Ascending aorta (tissue), 2 donors: ENCODE measurements at regions of chr2 and their contacts with region 1.

Region 1: GRCh38 chr2:174577967-174578589 is 19.5 kb downstream of the WIPF1 start:
- DNase-seq: no peak
- H3K4me3 ChIP-seq: no peak overlapping the region
- H3K27ac ChIP-seq: no peak overlapping the region
- H3K4me1 ChIP-seq: peaks cover 0 to 5% of the 10 kb centered on the region in 2 donors
- H3K27me3 ChIP-seq: no peaks in the 10 kb centered on the region
- CTCF ChIP-seq: peak; percentile 51 to 59 (median 51)

Region 2: GRCh38 chr2:174561283-174561971 is 16.7 kb before region 1 on chr2:
- intact Hi-C with region 1: no loop called
- DNase-seq: peak in 1 of 2 donors; percentile 78
- H3K4me3 ChIP-seq: peak overlapping the region in 1 of 2 donors; percentile 33
- H3K27ac ChIP-seq: peak overlapping the region; percentile 51 to 57
- H3K4me1 ChIP-seq: peaks cover 0 to 3% of the 10 kb centered on the region in 2 donors
- H3K27me3 ChIP-seq: no peaks in the 10 kb centered on the region
- CTCF ChIP-seq: no peak

Region 3: GRCh38 chr2:174603280-174603679 is 25.2 kb after region 1 on chr2:
- intact Hi-C with region 1: loop called (anchors 2 kb)
- DNase-seq: peak; percentile 35 to 83
- H3K4me3 ChIP-seq: no peak overlapping the region
- H3K27ac ChIP-seq: no peak overlapping the region
- H3K4me1 ChIP-seq: peaks cover 3 to 17% of the 10 kb centered on the region in 2 donors
- H3K27me3 ChIP-seq: no peaks in the 10 kb centered on the region
- CTCF ChIP-seq: peak; percentile 60 to 73 (median 63)

Region 4: GRCh38 chr2:174688079-174688478 is 110.0 kb after region 1 on chr2:
- intact Hi-C with region 1: loop called (anchors 2 kb)
- DNase-seq: no peak
- H3K4me3 ChIP-seq: no peak overlapping the region
- H3K27ac ChIP-seq: no peak overlapping the region
- H3K4me1 ChIP-seq: peaks cover 0 to 3% of the 10 kb centered on the region in 2 donors
- H3K27me3 ChIP-seq: no peaks in the 10 kb centered on the region
- CTCF ChIP-seq: peak; percentile 42 to 59 (median 43)

Region 5: DNA sequence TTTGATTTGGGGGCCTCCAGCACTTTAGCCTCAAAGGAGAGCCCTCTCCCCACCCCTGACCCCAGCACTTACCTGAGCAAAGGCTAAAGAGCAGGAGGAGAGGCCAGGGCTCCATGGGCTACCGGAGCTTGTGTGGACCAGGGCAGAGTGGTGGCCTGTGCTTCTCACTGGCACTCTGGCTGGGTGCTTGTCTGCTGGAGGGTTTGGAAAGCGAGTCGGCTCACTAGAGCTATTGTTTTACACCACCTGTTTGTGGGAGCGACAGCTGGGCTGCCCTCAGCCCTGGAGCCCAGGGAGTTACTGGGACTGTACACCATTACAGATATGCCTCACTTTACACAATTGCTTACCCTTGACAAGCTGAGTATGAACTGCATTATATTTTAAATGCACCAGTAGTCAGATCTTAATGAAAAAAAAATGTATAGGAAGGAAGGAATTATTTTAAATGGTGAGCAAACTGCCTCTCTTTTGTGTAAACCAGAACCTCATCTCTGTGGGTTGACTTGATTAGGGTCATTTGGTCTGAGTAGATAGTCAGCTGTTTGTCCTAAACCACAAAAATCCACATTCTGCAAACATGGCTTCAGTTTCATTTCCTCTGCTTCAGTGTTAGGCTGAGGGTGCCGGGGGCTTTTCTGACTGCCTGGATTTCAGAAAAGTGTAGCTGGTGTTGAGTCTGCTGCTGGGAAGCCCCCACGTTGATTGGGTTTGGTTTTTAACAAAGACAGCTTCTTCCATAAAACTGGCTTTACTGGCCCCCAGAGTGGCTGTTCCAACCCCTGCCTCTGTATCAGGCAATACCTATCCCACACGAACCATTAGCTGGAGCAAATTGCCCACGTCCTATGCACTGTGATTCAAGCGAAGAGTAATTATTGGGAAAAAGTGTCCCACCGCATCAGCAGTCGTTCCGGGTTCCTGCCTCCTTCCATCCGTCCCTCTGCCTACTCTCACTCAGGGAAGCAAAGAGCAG is 186.5 kb after region 1 on chr2 and contains the start of gene CHRNA1:
- intact Hi-C with region 1: loop called (anchors 10 kb)
- DNase-seq: peak in 1 of 2 donors; percentile 40
- H3K4me3 ChIP-seq: no peak within 1 kb of the TSS
- H3K27ac ChIP-seq: no peak within 1 kb of the TSS
- H3K4me1 ChIP-seq: no peaks in the 10 kb centered on the region
- H3K27me3 ChIP-seq: no peaks in the 10 kb centered on the region
- CTCF ChIP-seq: no peak
- total RNA-seq, gene CHRNA1: not detected